ENCODE measurements at regions of chr18 and their contacts with region 1.

Region 1: GRCh38 chr18:8654503-8655451 is 45.5 kb downstream of the RAB12 start:
- DNase-seq: no peak
- H3K4me3 ChIP-seq: no peak overlapping the region
- H3K27ac ChIP-seq: no peak overlapping the region
- H3K4me1 ChIP-seq: no peaks in the 10 kb centered on the region; the same call in 1 of the 2 replicates
- H3K27me3 ChIP-seq: no peaks in the 10 kb centered on the region
- CTCF ChIP-seq: peak; percentile 85

Region 2: DNA sequence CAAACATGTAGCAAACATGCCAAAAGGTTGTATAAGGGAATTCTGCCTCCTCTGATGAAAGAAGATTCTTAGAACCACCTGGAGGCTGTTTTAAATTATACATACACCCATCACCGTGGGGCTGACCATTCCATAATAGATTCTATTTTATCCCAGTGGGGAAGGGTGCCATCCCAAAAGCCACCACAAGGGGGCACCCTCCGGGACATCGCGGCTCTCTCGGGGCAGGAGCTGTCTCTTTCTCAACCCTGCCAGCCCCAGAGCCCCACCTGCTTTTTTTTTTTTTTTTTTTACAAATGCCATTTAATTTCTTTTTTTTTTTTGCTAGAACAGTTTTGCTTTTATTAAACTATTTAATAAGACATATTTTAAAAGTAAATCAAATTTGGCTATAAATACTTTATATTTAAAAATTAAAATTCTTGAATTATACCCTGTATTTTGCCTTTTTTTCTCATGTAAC is 42.0 kb after region 1 on chr18:
- CTCF ChIA-PET with region 1: interaction called, 3 read pairs
- POLR2A ChIA-PET with region 1: no interaction called
- intact Hi-C with region 1: loop called (anchors 5 kb)
- DNase-seq: peak in 1 of 2 experiments; percentile 84
- H3K4me3 ChIP-seq: no peak overlapping the region
- H3K27ac ChIP-seq: no peak overlapping the region
- H3K4me1 ChIP-seq: no peaks in the 10 kb centered on the region
- H3K27me3 ChIP-seq: no peaks in the 10 kb centered on the region
- CTCF ChIP-seq: peak; percentile 94

Region 3: GRCh38 chr18:9055185-9055584 is 400.4 kb after region 1 on chr18:
- CTCF ChIA-PET with region 1: no interaction called
- POLR2A ChIA-PET with region 1: no interaction called
- intact Hi-C with region 1: loop called (anchors 2 kb)
- DNase-seq: peak in 1 of 2 experiments; percentile 90
- H3K4me3 ChIP-seq: no peak overlapping the region
- H3K27ac ChIP-seq: peak overlapping the region; percentile 77
- H3K4me1 ChIP-seq: peaks cover 19% of the 10 kb centered on the region
- H3K27me3 ChIP-seq: no peaks in the 10 kb centered on the region
- CTCF ChIP-seq: no peak; the same call in 1 of the 2 replicates

Region 4: GRCh38 chr18:9147440-9148202 is 492.8 kb after region 1 on chr18:
- CTCF ChIA-PET with region 1: no interaction called
- POLR2A ChIA-PET with region 1: no interaction called
- intact Hi-C with region 1: loop called (anchors 2 kb)
- DNase-seq: peak; percentile 29 to 48
- H3K4me3 ChIP-seq: no peak overlapping the region
- H3K27ac ChIP-seq: peak overlapping the region; percentile 40
- H3K4me1 ChIP-seq: peaks cover 6% of the 10 kb centered on the region; the same call in 1 of the 2 replicates
- H3K27me3 ChIP-seq: no peaks in the 10 kb centered on the region
- CTCF ChIP-seq: peak; percentile 76

Measured in PC-9 (cell line).